Sciatic nerve (tissue), 2 donors: ENCODE measurements at regions of chr1 and their contacts with region 1.

Region 1: DNA sequence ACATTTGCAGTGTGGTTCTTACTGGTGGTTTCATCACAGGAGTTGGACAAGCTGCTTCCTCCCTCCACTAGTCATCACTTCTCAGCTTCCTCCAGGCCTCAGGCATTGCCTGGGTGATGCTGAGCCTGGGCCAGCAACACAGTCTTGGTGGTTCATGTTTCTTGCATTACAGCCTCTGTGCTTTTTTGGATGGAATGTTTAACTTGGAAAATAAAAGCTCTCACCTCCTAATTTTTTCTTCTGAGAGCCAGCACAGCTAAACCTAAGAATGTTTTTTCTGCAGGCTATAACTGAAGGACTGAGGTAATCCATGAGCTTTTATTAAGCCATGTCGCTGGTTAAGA is 66.1 kb upstream of the RHOU start:
- DNase-seq: no peak
- ATAC-seq: peak; percentile 87

Region 2: DNA sequence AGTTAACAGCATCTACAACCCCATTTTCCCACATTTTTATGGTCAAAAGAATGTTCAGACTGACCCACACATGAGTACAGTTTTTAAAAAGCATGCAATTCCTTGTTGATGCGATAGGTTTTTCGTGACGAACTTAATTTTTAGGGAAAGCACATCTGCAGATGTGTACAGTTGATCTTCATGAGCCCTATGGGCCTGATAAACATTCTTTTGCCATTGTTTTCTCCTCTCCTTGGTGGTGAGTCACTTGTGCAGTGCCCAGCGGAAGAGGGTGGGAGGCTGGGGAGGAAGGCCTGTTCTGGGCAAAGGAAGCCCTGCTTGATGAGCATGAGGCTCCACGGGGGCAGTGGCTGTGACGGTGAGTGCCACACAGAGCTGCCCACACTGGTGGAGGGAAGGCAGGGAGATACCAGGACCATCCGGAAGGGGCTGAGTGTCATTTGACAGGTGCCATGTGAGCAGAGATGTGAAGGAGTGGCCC is 581.4 kb before region 1 on chr1:
- intact Hi-C with region 1: loop called (anchors 5 kb)
- DNase-seq: no peak
- ATAC-seq: no peak

Region 3: GRCh38 chr1:228646717-228647522 is 22.3 kb before region 1 on chr1:
- intact Hi-C with region 1: no loop called
- DNase-seq: no peak
- ATAC-seq: peak; percentile 79

Region 4: GRCh38 chr1:228691926-228692325 is 22.7 kb after region 1 on chr1:
- intact Hi-C with region 1: no loop called
- DNase-seq: no peak
- ATAC-seq: no peak

Region 5: GRCh38 chr1:229661022-229661877 is 992.0 kb after region 1 on chr1:
- intact Hi-C with region 1: no loop called
- DNase-seq: peak; percentile 90
- ATAC-seq: peak; percentile 94